HEK293 (cell line): ENCODE measurements at regions of chr14 and their contacts with region 1.

Region 1: DNA sequence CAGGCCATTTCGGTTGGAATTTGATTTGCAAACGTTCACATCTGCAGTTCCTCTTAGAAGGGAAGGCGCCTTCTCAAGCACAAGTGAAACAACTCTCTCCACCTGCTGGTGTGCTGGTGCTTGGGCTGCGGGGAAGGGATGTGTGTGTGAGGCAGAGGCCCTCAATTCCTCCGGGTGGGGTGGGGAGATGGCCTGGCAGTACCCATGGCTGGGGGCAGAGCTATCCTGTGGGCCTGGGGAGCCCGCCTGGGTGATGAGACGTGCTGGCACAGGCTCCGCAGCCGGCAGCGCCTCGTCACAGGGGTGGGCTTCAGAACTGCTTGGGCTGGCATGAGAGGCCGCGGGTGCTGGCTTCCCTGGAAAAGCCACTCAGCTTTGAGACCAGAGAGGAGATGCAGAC is 28.9 kb upstream of the TDRD9 start:
- H3K4me3 ChIP-seq: no peak overlapping the region
- H3K27ac ChIP-seq: no peak overlapping the region
- H3K4me1 ChIP-seq: no peaks in the 10 kb centered on the region
- CTCF ChIP-seq: no peak

Region 2: GRCh38 chr14:103801459-103801858 is 97.9 kb before region 1 on chr14:
- CTCF ChIA-PET with region 1: interaction called, 33 read pairs
- POLR2A ChIA-PET with region 1: interaction called, 8 read pairs
- H3K4me3 ChIP-seq: no peak overlapping the region
- H3K27ac ChIP-seq: 0 out of 2 replicates have a peak overlapping the region, but pooled peaks have one; percentile 24
- H3K4me1 ChIP-seq: peaks cover 10% of the 10 kb centered on the region
- CTCF ChIP-seq: no peak

Region 3: DNA sequence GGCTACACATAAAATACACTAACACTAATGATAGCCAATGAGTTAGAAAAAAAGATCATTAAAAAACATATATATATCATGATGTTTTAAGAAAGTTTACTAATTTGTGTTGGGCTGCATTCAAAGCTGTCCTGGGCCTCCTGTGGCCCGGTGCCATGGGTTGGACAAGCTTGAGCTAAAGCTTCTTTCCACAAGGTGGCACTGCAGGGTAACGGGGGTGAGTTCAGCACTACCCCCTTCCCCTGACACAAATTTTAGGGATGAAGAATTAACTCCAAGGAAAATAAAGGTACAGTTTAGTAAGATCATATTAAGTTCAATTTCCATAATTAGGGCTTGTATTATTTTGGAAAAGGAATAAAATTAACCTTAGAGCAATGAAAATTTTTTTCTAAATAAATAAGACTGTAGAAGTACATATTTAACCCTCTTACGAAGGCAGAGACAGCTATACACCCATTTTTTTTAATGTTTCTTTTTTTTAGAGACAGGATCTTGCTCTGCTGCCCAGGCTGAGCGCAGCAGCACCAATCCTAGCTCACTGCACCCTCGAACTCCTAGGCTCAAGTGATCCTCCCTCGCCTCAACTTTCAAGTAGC is 90.8 kb before region 1 on chr14:
- CTCF ChIA-PET with region 1: interaction called, 33 read pairs
- POLR2A ChIA-PET with region 1: no interaction called
- H3K4me3 ChIP-seq: no peak overlapping the region
- H3K27ac ChIP-seq: no peak overlapping the region
- H3K4me1 ChIP-seq: no peaks in the 10 kb centered on the region
- CTCF ChIP-seq: peak; percentile 71; the same call in 1 of the 2 replicates

Region 4: GRCh38 chr14:103880348-103881267 is 18.7 kb before region 1 on chr14:
- CTCF ChIA-PET with region 1: interaction called, 17 read pairs
- POLR2A ChIA-PET with region 1: no interaction called
- H3K4me3 ChIP-seq: no peak overlapping the region
- H3K27ac ChIP-seq: no peak overlapping the region
- H3K4me1 ChIP-seq: no peaks in the 10 kb centered on the region
- CTCF ChIP-seq: no peak

Region 5: GRCh38 chr14:103910262-103910935 is 11.1 kb after region 1 on chr14:
- CTCF ChIA-PET with region 1: interaction called, 53 read pairs
- POLR2A ChIA-PET with region 1: no interaction called
- H3K4me3 ChIP-seq: no peak overlapping the region
- H3K27ac ChIP-seq: no peak overlapping the region
- H3K4me1 ChIP-seq: no peaks in the 10 kb centered on the region
- CTCF ChIP-seq: peak; percentile 83

Region 6: DNA sequence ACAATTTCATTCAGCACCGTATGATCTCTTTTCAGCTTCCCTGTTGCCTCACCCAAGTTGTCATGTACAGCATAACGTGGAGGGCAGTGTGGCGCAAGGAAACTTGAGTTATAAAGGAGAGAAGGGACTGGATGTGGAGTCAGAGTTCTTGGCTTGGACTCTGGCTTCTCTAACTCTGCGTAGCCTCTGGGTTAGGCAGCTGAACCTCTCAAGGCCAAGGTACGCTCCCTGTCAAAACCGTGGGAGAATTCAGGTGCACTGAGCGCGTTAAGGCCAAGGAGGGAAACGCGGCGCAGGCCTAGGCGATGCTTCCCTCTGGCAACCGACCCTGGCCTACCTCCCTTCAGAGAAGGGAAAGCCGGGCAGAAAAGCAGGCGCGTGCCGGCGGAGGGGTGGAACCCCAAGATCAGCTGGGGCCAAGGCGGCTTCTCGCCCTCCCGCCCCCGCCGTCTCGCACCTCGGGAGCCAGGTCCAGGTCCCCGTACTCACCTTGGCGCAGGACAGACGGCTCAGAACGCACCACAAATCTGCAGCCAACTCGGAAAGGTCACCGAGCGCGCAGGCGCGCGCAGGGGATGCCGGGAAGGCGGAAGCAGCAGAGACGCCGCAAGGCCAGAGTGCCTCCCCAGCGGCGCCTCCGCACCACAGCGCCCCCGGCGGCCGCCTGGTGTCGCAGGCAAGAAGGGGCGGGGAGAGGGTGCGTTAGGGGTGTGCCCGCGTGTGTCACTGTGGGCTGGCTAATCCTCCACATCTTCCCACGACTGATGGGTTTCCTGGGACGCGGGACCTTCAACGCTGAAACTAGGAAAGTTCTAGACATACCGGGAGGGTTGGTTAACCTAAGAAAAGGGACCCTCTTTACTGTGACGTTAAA is 21.9 kb after region 1 on chr14:
- CTCF ChIA-PET with region 1: interaction called, 11 read pairs
- POLR2A ChIA-PET with region 1: no interaction called
- H3K4me3 ChIP-seq: peak overlapping the region; percentile 94
- H3K27ac ChIP-seq: peak overlapping the region; percentile 67; the same call in 1 of the 2 replicates
- H3K4me1 ChIP-seq: peaks cover 2% of the 10 kb centered on the region; the same call in 1 of the 2 replicates
- CTCF ChIP-seq: peak; percentile 98

Region 7: GRCh38 chr14:103984196-103984595 is 84.9 kb after region 1 on chr14:
- CTCF ChIA-PET with region 1: interaction called, 10 read pairs
- POLR2A ChIA-PET with region 1: no interaction called
- H3K4me3 ChIP-seq: no peak overlapping the region
- H3K27ac ChIP-seq: no peak overlapping the region
- H3K4me1 ChIP-seq: no peaks in the 10 kb centered on the region
- CTCF ChIP-seq: no peak